ENCODE measurements at regions of chr15 and their contacts with region 1.

Region 1: GRCh38 chr15:66955871-66956585 is 109.4 kb upstream of the SMAD3 start:
- DNase-seq: no peak
- H3K4me3 ChIP-seq: no peak overlapping the region
- H3K27ac ChIP-seq: no peak overlapping the region
- H3K4me1 ChIP-seq: no peaks in the 10 kb centered on the region
- H3K27me3 ChIP-seq: no peaks in the 10 kb centered on the region
- CTCF ChIP-seq: no peak

Region 2: DNA sequence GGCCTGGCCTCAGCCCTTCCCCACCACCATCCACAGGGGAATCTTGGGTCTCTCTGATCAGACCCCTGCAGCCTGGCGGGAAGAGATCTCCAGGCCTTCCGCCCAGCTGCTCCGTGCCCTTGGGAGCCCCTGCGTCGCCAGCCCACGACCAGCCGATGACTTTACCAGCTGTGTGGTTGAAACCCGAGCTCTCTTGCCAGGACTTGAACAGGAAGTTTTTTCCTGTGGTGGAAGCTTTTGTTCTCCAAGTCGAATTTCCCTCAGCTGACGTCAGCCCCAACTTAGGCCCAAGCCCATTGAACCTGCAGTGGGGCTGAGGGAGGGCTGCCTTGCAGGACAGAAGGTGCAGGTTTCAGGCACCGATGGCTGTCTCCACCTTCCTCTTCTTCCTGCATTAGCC is 57.7 kb after region 1 on chr15:
- CTCF ChIA-PET with region 1: no interaction called
- POLR2A ChIA-PET with region 1: no interaction called
- intact Hi-C with region 1: no loop called
- DNase-seq: peak; percentile 79
- H3K4me3 ChIP-seq: no peak overlapping the region
- H3K27ac ChIP-seq: peak overlapping the region; percentile 26
- H3K4me1 ChIP-seq: peaks cover 10% of the 10 kb centered on the region
- H3K27me3 ChIP-seq: no peaks in the 10 kb centered on the region
- CTCF ChIP-seq: no peak

Region 3: GRCh38 chr15:67065444-67066093 is 109.5 kb after region 1 on chr15 and contains the start of gene SMAD3:
- CTCF ChIA-PET with region 1: no interaction called
- POLR2A ChIA-PET with region 1: no interaction called
- intact Hi-C with region 1: loop called (anchors 10 kb)
- DNase-seq: peak; percentile 94
- H3K4me3 ChIP-seq: peak within 1 kb of the TSS; percentile 98
- H3K27ac ChIP-seq: peak within 1 kb of the TSS; percentile 86
- H3K4me1 ChIP-seq: peaks cover 24% of the 10 kb centered on the region
- H3K27me3 ChIP-seq: no peaks in the 10 kb centered on the region
- CTCF ChIP-seq: no peak
- total RNA-seq, gene SMAD3: 31.0 and 43.0 TPM in 2 replicates